ENCODE measurements at regions of chr10 and their contacts with region 1.

Region 1: GRCh38 chr10:97561678-97562077 is 10.9 kb upstream of the ANKRD2 start:
- DNase-seq: peak in 1 of 5 donors; percentile 9
- ATAC-seq: no peak
- H3K4me3 ChIP-seq: no peak overlapping the region
- H3K27ac ChIP-seq: no peak overlapping the region
- H3K4me1 ChIP-seq: peaks cover 0 to 10% (median 0%) of the 10 kb centered on the region in 12 donors
- H3K27me3 ChIP-seq: no peaks in the 10 kb centered on the region
- CTCF ChIP-seq: no peak
- POLR2A ChIP-seq: no peak

Region 2: DNA sequence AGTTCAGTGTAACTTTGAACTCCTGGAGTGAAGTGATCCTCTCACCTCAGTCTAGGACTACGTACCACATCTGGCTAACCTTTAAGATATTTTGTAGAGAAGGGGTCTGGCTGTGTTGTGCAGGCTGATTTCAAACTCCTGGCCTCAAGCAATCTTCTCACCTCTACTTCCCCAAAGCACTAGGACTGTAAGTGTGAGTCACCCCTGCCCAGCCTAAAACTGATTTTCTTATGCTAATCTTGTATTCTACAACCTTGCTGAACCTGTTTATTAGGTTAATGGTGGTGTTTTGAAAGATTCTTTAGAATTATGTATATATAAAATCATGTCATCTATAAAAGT is 671.5 kb before region 1 on chr10:
- intact Hi-C with region 1: no loop called
- DNase-seq: no peak
- ATAC-seq: peak in 1 of 4 donors; percentile 24
- H3K4me3 ChIP-seq: no peak overlapping the region
- H3K27ac ChIP-seq: no peak overlapping the region
- H3K4me1 ChIP-seq: peaks cover 0 to 14% (median 3%) of the 10 kb centered on the region in 12 donors
- H3K27me3 ChIP-seq: no peaks in the 10 kb centered on the region
- CTCF ChIP-seq: no peak
- POLR2A ChIP-seq: no peak

Region 3: DNA sequence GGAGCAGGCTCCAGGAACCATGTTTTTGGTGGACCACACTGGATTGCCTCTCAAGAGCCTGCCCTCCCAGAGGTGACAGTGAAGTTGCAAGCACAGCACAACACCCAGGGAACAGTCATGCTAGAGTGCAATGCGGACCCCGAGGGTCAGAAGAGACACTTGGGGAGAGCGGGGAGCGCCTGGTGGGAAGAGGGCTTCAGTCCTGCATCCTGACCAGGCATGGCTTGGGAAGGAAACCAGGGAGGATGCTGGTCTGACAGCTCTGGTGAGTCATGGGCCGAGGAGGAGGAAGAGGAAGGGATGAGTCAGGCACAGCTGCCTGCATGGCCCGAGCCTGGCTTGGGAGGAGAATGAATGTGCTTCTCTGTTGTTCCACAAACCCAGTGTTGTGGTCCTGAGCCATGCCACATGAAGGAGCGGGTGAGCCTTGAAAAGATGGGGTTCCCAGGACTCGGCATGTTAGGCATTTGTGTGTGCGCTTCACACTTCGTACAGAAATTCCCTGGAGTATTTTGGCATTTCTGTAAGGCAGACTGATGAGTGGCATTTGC is 18.6 kb before region 1 on chr10:
- intact Hi-C with region 1: loop called in 1 of 10 experiments (anchors 1 kb)
- DNase-seq: peak; percentile 83 to 94 (median 88)
- ATAC-seq: peak; percentile 78 to 92 (median 88)
- H3K4me3 ChIP-seq: no peak overlapping the region
- H3K27ac ChIP-seq: peak overlapping the region; percentile 77 to 97 (median 88)
- H3K4me1 ChIP-seq: peaks cover 0 to 75% (median 57%) of the 10 kb centered on the region in 12 donors
- H3K27me3 ChIP-seq: no peaks in the 10 kb centered on the region
- CTCF ChIP-seq: no peak
- POLR2A ChIP-seq: peak in 1 of 2 donors; percentile 31

Region 4: GRCh38 chr10:97659589-97659988 is 97.9 kb after region 1 on chr10:
- intact Hi-C with region 1: no loop called
- DNase-seq: no peak
- ATAC-seq: no peak
- H3K4me3 ChIP-seq: no peak overlapping the region
- H3K27ac ChIP-seq: no peak overlapping the region
- H3K4me1 ChIP-seq: no peaks in the 10 kb centered on the region
- H3K27me3 ChIP-seq: no peaks in the 10 kb centered on the region
- CTCF ChIP-seq: no peak
- POLR2A ChIP-seq: no peak